Uterus (tissue), 4 donors: ENCODE measurements at regions of chr15 and their contacts with region 1.

Region 1: DNA sequence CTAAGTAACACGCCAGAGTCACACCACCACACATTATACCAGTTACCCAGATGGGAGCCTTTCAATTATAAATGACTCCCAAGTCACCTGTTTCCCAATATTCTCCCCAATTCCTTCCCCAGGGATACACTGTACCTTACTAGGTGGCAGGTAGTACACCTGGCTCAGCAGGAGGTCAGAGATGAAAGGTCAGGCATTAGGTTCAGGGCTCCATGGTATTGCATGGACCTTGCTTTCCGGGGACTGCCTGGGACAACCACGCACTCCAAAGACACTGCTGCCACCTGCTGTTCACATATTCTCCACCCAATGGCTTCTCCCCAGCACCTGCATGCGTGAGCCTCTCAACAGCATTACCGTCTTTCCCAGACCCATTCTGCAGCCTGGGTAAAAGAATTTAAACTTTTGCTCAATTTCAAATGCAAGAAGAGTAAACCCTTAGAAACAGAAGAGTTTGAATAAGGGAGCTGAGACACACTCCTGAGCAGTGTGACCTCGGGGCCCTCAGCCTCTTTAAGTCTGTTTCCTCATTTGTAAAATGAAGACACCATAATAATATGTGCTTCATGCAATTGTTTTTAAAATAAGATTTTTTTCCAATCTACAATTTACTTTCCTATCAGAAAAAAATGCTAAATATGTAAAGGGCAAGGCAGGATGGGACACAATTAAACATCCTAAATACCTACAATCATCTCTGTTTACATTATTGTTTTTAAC is 28.0 kb upstream of the LACTB start:
- DNase-seq: peak; percentile 86 to 87
- H3K4me3 ChIP-seq: no peak overlapping the region
- H3K27ac ChIP-seq: no peak overlapping the region
- H3K4me1 ChIP-seq: no peaks in the 10 kb centered on the region
- H3K27me3 ChIP-seq: no peaks in the 10 kb centered on the region
- CTCF ChIP-seq: peak; percentile 90 to 94 (median 92)
- POLR2A ChIP-seq: no peak

Region 2: DNA sequence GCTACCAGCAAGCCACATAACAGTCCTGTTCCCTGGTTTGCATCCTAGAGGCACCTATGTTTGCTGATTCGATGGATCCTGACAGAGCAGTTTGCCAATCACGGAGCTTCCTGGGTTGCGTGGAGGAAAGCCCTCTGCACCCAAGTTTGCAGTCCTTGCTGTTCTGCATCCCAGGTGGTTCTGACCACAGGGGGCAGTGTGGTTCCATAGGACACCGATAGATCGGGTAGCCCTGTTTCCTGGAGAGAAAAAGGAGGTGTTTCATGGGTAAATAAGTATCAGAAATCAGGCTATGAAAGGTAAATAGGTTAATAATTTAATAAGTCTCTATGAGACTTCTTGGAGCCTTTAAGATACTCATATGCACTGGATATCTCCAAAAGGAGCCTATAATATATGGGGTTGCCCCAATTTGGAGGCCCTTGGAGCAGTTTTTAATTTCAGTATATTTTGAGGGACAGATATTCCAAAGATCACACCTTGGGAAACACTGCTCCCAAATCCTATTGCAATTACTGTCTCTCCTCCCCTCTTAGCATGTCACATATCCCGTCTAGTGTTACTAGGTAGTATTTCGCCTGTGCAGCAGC is 245.7 kb before region 1 on chr15:
- intact Hi-C with region 1: loop called (anchors 5 kb)
- DNase-seq: peak; percentile 76 to 82
- H3K4me3 ChIP-seq: no peak overlapping the region
- H3K27ac ChIP-seq: peak overlapping the region; percentile 36 to 69
- H3K4me1 ChIP-seq: peaks cover 0 to 6% of the 10 kb centered on the region in 2 donors
- H3K27me3 ChIP-seq: no peaks in the 10 kb centered on the region
- CTCF ChIP-seq: peak; percentile 60 to 83 (median 66)
- POLR2A ChIP-seq: no peak

Region 3: GRCh38 chr15:63048115-63048775 is 45.4 kb before region 1 on chr15:
- intact Hi-C with region 1: loop called (anchors 5 kb)
- DNase-seq: peak; percentile 93 to 94
- H3K4me3 ChIP-seq: peak overlapping the region; percentile 77 to 89
- H3K27ac ChIP-seq: peak overlapping the region; percentile 97 to 98
- H3K4me1 ChIP-seq: peaks cover 0 to 16% of the 10 kb centered on the region in 2 donors
- H3K27me3 ChIP-seq: no peaks in the 10 kb centered on the region
- CTCF ChIP-seq: peak; percentile 87 to 96 (median 90)
- POLR2A ChIP-seq: peak; percentile 51 to 91